B cell (primary cell): ENCODE measurements at regions of chr4 and their contacts with region 1.

Region 1: GRCh38 chr4:8144359-8144758 is 14.3 kb downstream of the ABLIM2 start:
- DNase-seq: no peak
- ATAC-seq: no peak
- H3K4me3 ChIP-seq: no peak overlapping the region
- H3K4me3 Mint-ChIP-seq: no peak overlapping the region
- H3K27ac ChIP-seq: no peak overlapping the region
- H3K27ac Mint-ChIP-seq: no peak overlapping the region
- H3K4me1 ChIP-seq: no peaks in the 10 kb centered on the region
- H3K4me1 Mint-ChIP-seq: no peaks in the 10 kb centered on the region
- H3K27me3 ChIP-seq: peaks cover 0 to 26% (median 1%) of the 10 kb centered on the region in 4 experiments
- H3K27me3 Mint-ChIP-seq: peaks cover 12% of the 10 kb centered on the region
- CTCF ChIP-seq: no peak

Region 2: DNA sequence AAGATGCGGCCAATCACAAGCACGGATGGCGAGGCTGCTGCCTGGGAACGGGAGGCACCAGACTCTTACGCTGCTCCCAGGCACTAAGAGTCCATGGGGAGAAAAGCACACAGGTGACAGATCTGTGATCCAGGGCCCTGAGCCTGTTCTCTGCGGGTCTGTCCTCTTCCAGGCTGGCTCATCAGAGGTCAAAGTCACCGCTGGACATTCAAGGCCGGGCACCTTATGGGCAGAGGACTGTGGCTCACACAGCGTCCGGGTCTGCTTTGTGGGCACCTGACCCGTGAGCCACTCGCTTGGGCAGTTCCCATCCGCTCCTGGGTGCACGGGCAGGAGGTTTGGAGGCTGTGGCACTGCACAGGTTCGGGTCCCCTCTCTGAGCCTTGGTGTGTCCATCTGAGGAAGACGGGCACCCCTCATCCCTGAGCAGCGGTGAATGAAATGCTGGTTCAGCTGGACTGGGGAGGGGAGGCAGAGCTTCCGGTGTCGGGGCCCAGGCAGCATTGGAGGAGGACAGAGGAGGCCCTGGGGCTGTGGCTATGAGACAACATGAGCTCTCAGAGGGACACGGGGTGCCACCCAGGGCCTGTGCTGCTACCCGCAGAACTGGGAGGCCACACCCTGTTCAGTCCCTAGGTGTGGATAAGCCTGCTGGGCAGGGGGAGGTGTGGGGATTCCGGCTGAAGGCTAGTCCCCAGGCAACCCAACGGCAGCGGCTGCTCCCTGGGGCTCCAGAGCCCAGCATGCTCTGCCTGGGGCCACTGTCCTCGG is 143.5 kb before region 1 on chr4:
- CTCF ChIA-PET with region 1: no interaction called
- POLR2A ChIA-PET with region 1: no interaction called
- intact Hi-C with region 1: no loop called
- DNase-seq: no peak
- ATAC-seq: no peak
- H3K4me3 ChIP-seq: no peak overlapping the region
- H3K4me3 Mint-ChIP-seq: no peak overlapping the region
- H3K27ac ChIP-seq: no peak overlapping the region
- H3K27ac Mint-ChIP-seq: no peak overlapping the region
- H3K4me1 ChIP-seq: no peaks in the 10 kb centered on the region
- H3K4me1 Mint-ChIP-seq: no peaks in the 10 kb centered on the region
- H3K27me3 ChIP-seq: no peaks in the 10 kb centered on the region
- H3K27me3 Mint-ChIP-seq: peaks cover 3% of the 10 kb centered on the region
- CTCF ChIP-seq: no peak

Region 3: GRCh38 chr4:8035371-8035780 is 109.0 kb before region 1 on chr4:
- CTCF ChIA-PET with region 1: no interaction called
- POLR2A ChIA-PET with region 1: interaction called, 10 read pairs
- intact Hi-C with region 1: no loop called
- DNase-seq: no peak
- ATAC-seq: no peak
- H3K4me3 ChIP-seq: no peak overlapping the region
- H3K4me3 Mint-ChIP-seq: no peak overlapping the region
- H3K27ac ChIP-seq: no peak overlapping the region
- H3K27ac Mint-ChIP-seq: no peak overlapping the region
- H3K4me1 ChIP-seq: peaks cover 6 to 9% of the 10 kb centered on the region in 2 donors
- H3K4me1 Mint-ChIP-seq: peaks cover 7% of the 10 kb centered on the region
- H3K27me3 ChIP-seq: peaks cover 0 to 9% (median under 1%) of the 10 kb centered on the region in 4 experiments
- H3K27me3 Mint-ChIP-seq: peaks cover 35% of the 10 kb centered on the region
- CTCF ChIP-seq: no peak